Posterior vena cava (tissue), 2 donors: ENCODE measurements at regions of chr11 and their contacts with region 1.

Region 1: GRCh38 chr11:17063171-17064002 is 14.1 kb downstream of the RPS13 start:
- DNase-seq: peak; percentile 89

Region 2: DNA sequence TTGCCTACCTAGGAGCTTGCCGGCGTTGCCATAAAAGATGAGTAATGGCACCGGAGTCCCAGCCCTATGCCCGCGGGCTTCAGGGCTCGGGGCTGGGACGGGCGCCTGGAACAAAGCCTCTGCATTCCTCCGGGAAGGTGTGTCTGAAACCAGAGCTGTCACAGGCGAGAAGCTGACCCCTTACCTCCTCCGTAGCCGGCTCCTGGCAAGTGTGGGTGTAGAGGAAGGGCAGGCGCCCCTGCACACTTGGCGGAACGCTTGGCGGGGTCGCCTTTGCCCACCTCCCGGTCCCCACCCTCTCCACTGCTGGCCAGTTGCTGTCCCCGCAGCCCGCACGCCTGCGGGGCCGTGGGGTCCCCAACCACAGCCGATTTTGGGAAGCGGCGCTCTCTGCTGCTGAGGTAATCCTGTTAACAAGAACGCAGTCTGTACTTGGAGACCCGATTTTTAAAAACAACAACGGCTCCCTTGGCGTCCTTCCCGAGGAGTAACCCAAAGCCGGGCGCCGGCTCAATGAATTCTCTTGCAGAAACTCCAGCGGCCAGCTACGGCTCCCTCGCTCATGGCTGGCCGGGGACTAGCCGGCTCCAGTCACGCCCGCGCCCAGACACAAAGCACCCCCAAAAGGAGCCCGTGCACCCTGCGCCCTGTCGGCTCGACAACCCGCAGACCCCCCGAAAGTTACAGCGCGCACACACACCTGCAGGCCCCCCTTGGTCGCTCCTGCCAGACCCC is 138.4 kb before region 1 on chr11:
- intact Hi-C with region 1: loop called in 1 of 2 experiments (anchors 10 kb)
- DNase-seq: peak; percentile 84

Region 3: GRCh38 chr11:17164361-17165246 is 101.2 kb after region 1 on chr11:
- intact Hi-C with region 1: no loop called
- DNase-seq: no peak